ENCODE measurements at regions of chr20 and their contacts with region 1.

Region 1: GRCh38 chr20:35077341-35077740 is 15.3 kb downstream of the TRPC4AP start:
- DNase-seq: no peak

Region 2: DNA sequence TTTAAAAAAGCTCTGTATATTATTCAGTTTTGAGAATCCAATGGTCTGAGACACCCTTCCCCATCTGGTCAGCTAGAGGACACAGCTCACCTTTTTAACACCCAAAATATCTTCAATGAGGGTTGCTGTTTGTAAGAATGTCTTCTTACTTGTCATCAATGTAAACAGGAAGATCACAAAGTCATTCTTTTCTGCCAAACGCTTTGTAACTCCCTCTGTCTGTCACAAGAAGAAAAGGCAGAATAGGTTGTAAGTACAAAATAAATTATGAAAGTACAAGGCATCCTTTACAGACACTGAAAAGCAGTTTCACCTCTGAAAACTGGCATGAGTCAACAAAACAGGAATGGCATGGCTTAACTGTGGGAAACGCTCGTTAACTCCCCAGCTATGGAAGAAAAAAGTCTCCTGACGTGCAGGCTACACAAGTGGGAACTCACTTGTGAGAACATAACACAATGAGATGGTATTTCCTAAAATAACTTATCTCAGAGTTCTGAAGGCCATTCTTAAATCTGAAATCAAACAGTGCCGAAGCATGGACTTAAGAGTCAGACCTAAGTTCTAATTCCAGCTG is 27.5 kb before region 1 on chr20:
- intact Hi-C with region 1: loop called in 1 of 2 experiments (anchors 1 kb)
- DNase-seq: no peak